Breast epithelium (tissue), 4 donors: ENCODE measurements at regions of chr16 and their contacts with region 1.

Region 1: DNA sequence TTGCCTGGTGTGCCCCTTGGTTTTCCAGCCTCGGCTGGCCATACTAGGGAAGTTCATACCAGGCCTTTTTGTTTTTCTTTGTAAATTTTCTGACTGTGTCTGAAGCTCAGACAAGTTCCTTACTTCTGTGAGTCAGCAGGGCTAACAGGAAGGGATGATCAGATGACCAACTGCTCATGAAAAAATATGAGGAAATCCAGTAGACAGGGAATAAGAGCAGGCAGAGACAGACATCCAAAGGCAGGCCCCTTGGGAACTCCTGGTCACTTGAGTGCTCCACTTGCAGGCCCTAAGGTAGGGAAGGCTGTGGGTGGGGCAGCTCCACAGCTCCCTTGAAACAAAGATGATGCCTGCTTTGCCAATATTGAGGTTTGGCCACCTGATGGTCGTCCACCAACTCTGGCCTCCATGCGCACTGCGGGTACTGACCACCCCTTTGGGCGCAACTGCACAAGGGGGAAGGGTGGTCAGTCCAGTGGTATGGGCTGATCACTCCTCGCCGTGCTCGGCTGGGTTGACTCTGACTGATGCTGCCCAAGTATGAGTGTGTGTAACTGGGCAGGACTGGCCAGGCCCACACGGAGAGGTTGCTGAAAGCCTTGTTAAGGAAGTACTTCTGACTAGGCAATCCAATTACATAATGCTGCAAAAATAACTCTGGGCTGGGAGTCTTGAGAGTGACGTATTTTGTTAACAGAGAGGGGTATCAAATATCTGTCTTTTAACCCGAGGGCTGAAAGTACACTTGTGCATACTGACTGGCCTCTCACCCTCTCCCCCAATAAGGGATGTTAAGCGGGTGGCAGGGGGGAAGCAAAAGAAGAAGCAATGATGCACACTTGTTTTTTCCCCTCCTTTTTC is 20.8 kb upstream of the ZFHX3 start:
- DNase-seq: no peak
- H3K4me3 ChIP-seq: no peak overlapping the region
- H3K27ac ChIP-seq: peak overlapping the region; percentile 57 to 76
- H3K4me1 ChIP-seq: peaks cover 4 to 13% of the 10 kb centered on the region in 2 donors
- H3K27me3 ChIP-seq: peaks cover 3 to 37% of the 10 kb centered on the region in 2 donors
- CTCF ChIP-seq: no peak
- POLR2A ChIP-seq: no peak

Region 2: GRCh38 chr16:71474864-71475263 is 1593.9 kb before region 1 on chr16:
- intact Hi-C with region 1: loop called (anchors 5 kb)
- DNase-seq: no peak
- H3K4me3 ChIP-seq: no peak overlapping the region
- H3K27ac ChIP-seq: no peak overlapping the region
- H3K4me1 ChIP-seq: no peaks in the 10 kb centered on the region
- H3K27me3 ChIP-seq: no peaks in the 10 kb centered on the region
- CTCF ChIP-seq: no peak
- POLR2A ChIP-seq: no peak

Region 3: DNA sequence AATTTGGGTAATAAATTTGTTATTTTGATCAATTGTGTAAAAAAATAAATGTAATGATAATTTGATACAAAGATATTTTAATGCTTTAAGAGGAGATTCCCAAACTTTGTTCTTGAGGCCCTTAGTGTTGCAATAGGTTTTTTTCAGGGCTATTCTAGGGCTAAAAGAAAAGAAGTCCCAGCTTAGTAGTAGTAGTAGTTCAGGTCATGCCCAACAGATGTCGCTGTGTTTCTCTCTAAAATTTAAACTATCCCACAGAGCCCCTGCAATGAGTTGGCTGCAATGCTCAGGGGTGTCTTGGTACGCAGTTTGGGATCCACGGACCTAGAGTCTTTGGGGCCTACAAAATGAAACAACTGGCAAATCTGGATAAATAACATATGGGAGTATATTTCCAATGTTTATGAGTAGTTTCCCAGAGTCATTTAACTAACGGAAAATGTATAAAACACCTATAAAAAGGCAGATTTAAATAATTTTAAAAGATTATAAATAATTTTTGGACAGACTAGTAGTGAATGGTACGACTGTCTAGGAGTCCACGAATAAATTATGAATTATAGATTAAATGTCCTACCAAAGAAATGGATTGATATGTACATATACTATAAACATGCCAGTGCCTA is 668.4 kb before region 1 on chr16:
- intact Hi-C with region 1: no loop called
- DNase-seq: no peak
- H3K4me3 ChIP-seq: no peak overlapping the region
- H3K27ac ChIP-seq: no peak overlapping the region
- H3K4me1 ChIP-seq: no peaks in the 10 kb centered on the region
- H3K27me3 ChIP-seq: no peaks in the 10 kb centered on the region
- CTCF ChIP-seq: peak; percentile 15 to 64 (median 35)
- POLR2A ChIP-seq: no peak

Region 4: GRCh38 chr16:72797621-72798020 is 271.1 kb before region 1 on chr16:
- intact Hi-C with region 1: no loop called
- DNase-seq: no peak
- H3K4me3 ChIP-seq: no peak overlapping the region
- H3K27ac ChIP-seq: no peak overlapping the region
- H3K4me1 ChIP-seq: no peaks in the 10 kb centered on the region
- H3K27me3 ChIP-seq: no peaks in the 10 kb centered on the region
- CTCF ChIP-seq: no peak
- POLR2A ChIP-seq: no peak

Region 5: DNA sequence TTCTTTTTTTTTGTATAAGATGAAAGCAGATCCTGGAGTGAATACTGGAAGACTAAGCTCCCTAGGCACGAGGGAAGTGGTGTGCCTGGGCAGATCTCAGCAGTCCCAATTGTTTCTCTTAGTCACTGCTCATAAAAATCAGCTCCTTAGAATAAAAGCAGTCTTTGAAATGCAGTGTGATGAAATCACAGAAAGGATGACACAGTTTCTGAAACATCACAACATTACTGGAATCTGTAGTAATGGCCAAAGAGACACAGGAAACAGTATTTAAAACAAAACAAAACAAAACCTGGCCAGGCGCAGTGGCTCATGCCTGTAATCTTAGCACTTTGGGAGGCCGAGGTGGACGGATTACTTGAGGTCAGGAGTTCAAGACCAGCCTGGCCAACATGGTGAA is 13.8 kb after region 1 on chr16:
- intact Hi-C with region 1: no loop called
- DNase-seq: no peak
- H3K4me3 ChIP-seq: no peak overlapping the region
- H3K27ac ChIP-seq: no peak overlapping the region
- H3K4me1 ChIP-seq: no peaks in the 10 kb centered on the region
- H3K27me3 ChIP-seq: no peaks in the 10 kb centered on the region
- CTCF ChIP-seq: no peak
- POLR2A ChIP-seq: no peak